Caco-2 (cell line): ENCODE measurements at regions of chr5 and their contacts with region 1.

Region 1: GRCh38 chr5:121763665-121764064 is 88.0 kb upstream of the FTMT start:
- DNase-seq: no peak
- H3K4me3 ChIP-seq: no peak overlapping the region
- H3K4me3 Mint-ChIP-seq: no peak overlapping the region
- H3K27ac Mint-ChIP-seq: no peak overlapping the region
- H3K4me1 ChIP-seq: peaks cover 20% of the 10 kb centered on the region
- H3K4me1 Mint-ChIP-seq: peaks cover 7% of the 10 kb centered on the region
- H3K27me3 ChIP-seq: no peaks in the 10 kb centered on the region
- H3K27me3 Mint-ChIP-seq: no peaks in the 10 kb centered on the region
- CTCF ChIP-seq: no peak

Region 2: DNA sequence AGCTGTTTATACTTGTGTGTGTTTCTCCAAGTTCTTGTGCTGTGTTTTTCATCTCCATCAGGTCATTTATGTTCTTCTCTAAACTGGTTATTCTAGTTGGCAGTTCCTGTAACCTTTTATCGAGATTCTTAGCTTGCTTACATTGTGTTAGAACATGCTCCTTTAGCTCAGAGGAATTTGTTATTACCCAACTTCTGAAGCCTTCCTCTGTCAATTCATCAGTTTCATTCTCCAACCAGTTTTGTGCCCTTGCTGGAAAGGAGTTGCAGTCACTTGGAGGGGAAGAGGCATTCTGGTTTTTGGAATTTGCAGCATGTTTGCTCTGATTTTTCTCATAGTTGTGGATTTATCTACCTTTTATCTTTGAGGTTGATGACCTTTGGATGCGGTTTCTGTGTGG is 38.2 kb before region 1 on chr5:
- CTCF ChIA-PET with region 1: no interaction called
- POLR2A ChIA-PET with region 1: no interaction called
- intact Hi-C with region 1: loop called (anchors 1 kb)
- DNase-seq: peak in 1 of 2 experiments; percentile 49
- H3K4me3 ChIP-seq: no peak overlapping the region
- H3K4me3 Mint-ChIP-seq: peak overlapping the region; percentile 3
- H3K27ac Mint-ChIP-seq: peak overlapping the region; percentile 78
- H3K4me1 ChIP-seq: peaks cover 17% of the 10 kb centered on the region
- H3K4me1 Mint-ChIP-seq: peaks cover 15% of the 10 kb centered on the region
- H3K27me3 ChIP-seq: no peaks in the 10 kb centered on the region
- H3K27me3 Mint-ChIP-seq: no peaks in the 10 kb centered on the region
- CTCF ChIP-seq: no peak

Region 3: DNA sequence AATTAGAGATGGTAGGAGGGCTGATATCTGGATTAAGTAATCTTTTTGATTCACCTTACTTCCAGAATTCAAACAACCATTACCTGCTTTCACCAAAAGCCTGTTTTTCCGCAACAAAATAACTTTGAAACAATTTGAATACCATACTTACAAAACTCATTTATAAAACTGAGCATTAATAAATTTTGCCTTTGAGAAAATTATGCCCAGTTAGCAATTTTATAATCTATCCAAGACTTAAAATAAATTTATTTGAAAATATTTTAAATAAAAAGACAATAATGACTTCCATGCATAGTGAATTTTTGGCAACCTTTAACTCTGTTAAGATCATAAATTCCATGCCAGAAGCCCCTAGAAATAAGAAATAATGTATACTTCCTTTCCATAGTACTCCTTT is 16.7 kb after region 1 on chr5:
- CTCF ChIA-PET with region 1: no interaction called
- POLR2A ChIA-PET with region 1: no interaction called
- intact Hi-C with region 1: loop called (anchors 2 kb)
- DNase-seq: no peak
- H3K4me3 ChIP-seq: no peak overlapping the region
- H3K4me3 Mint-ChIP-seq: no peak overlapping the region
- H3K27ac Mint-ChIP-seq: no peak overlapping the region
- H3K4me1 ChIP-seq: no peaks in the 10 kb centered on the region
- H3K4me1 Mint-ChIP-seq: no peaks in the 10 kb centered on the region
- H3K27me3 ChIP-seq: no peaks in the 10 kb centered on the region
- H3K27me3 Mint-ChIP-seq: peaks cover 4% of the 10 kb centered on the region
- CTCF ChIP-seq: no peak

Region 4: GRCh38 chr5:122035913-122036312 is 272.2 kb after region 1 on chr5:
- CTCF ChIA-PET with region 1: no interaction called
- POLR2A ChIA-PET with region 1: no interaction called
- intact Hi-C with region 1: no loop called
- DNase-seq: peak; percentile 82 to 92
- H3K4me3 ChIP-seq: no peak overlapping the region
- H3K4me3 Mint-ChIP-seq: peak overlapping the region; percentile 50
- H3K27ac Mint-ChIP-seq: peak overlapping the region; percentile 31
- H3K4me1 ChIP-seq: peaks cover 63% of the 10 kb centered on the region
- H3K4me1 Mint-ChIP-seq: peaks cover 76% of the 10 kb centered on the region
- H3K27me3 ChIP-seq: no peaks in the 10 kb centered on the region
- H3K27me3 Mint-ChIP-seq: no peaks in the 10 kb centered on the region
- CTCF ChIP-seq: no peak